AG04449 (cell line): ENCODE measurements at regions of chr14 and their contacts with region 1.

Region 1: GRCh38 chr14:22531451-22532344 is 57.3 kb downstream of the DAD1 start:
- DNase-seq: no peak
- H3K4me3 ChIP-seq: no peak overlapping the region
- CTCF ChIP-seq: no peak

Region 2: GRCh38 chr14:22221508-22221907 is 310.2 kb before region 1 on chr14:
- CTCF ChIA-PET with region 1: no interaction called
- POLR2A ChIA-PET with region 1: no interaction called
- DNase-seq: no peak
- H3K4me3 ChIP-seq: no peak overlapping the region
- CTCF ChIP-seq: peak; percentile 22

Region 3: DNA sequence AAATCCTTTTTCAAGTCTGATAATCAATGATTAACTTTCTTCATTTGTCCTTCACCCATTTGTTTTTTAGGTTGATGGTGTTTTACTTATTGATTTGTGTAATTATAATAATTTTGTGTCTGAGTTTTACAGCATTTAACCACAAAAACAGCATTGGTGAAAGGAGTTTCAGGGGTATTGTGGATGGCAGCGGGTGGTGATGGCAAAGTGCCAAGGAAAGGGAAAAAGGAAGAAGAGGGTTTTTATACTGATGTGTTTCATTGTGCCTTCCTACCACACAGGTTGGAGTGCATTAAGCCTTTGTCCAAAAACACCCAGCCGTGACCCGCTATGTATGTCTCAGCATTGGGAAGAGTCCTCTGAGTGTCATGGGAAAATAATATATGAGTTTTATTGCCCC is 93.0 kb before region 1 on chr14:
- CTCF ChIA-PET with region 1: no interaction called
- POLR2A ChIA-PET with region 1: no interaction called
- DNase-seq: no peak
- H3K4me3 ChIP-seq: no peak overlapping the region
- CTCF ChIP-seq: no peak

Region 4: GRCh38 chr14:22491683-22492621 is 39.7 kb before region 1 on chr14:
- CTCF ChIA-PET with region 1: no interaction called
- POLR2A ChIA-PET with region 1: no interaction called
- DNase-seq: no peak
- H3K4me3 ChIP-seq: no peak overlapping the region
- CTCF ChIP-seq: no peak

Region 5: GRCh38 chr14:22545842-22546721 is 14.4 kb after region 1 on chr14:
- CTCF ChIA-PET with region 1: interaction called, 10 read pairs
- POLR2A ChIA-PET with region 1: no interaction called
- DNase-seq: no peak
- H3K4me3 ChIP-seq: 0 out of 2 replicates have a peak overlapping the region, but pooled peaks have one; percentile 7
- CTCF ChIP-seq: no peak